ENCODE measurements at regions of chr11 and their contacts with region 1.

Region 1: DNA sequence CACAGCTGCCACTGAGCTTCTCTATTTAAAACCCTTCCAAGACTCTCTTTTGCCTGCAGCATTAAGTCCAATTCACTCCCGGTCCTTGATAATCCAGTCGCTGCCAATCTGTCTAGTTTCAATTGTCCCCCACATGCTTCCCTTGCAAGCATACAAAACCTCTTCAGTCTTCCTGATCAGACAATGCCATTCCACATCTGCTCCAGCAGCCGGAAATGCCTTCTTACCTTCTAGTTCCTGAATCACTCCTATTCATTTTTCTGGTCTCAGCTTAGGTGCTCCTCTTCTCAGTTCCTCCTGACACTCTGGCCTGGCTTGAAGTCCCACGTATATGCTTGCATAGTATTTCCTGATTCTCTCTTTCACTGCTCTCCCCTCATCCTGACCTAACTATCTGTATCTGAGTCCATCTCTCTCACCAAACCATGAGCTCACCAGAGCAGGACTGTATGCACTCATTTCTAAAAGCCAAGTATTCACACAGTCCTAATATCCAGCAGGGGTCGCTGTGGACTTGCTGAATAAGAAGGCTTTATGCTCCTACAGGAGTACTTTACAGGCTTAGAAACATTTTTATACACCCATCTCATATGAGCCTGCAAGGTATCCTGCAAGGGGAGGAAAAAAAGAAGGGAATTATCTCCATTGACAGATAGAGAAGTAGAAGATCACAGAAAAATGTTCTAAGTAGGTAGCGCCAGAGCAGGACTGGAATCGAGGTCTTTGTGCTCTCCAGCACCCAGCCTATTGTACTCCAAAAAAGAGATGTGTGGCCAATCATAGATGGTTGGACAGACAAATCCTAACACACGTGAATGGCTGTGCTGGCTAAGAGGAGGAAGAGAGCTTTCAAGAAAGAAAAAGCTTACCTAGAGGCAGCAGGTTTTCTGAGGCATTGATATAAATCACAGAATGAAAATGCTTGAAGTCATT is 19.2 kb downstream of the XRRA1 start:
- DNase-seq: peak; percentile 74
- H3K4me3 ChIP-seq: no peak overlapping the region
- CTCF ChIP-seq: peak; percentile 76

Region 2: DNA sequence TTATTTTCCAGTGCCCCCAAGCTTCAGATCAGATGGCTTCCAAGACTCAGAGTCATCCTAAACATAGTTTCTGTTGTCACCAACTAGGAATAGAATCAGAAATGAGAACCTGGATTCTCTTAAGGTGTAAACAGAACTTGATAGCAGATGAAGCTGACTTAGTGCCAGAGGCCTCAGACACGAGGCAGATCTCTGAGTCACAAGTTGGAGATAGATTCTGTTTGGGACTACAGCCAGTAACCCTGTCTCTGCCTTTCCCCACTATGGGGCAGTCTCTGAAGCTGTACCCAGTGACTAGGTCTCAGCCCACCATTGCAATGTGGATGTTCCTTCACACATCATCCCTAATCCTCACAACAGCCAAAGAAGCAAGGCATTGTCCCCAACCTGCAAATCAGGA is 84.4 kb after region 1 on chr11:
- CTCF ChIA-PET with region 1: interaction called, 12 read pairs
- POLR2A ChIA-PET with region 1: no interaction called
- DNase-seq: peak; percentile 57
- H3K4me3 ChIP-seq: no peak overlapping the region
- CTCF ChIP-seq: no peak

Region 3: DNA sequence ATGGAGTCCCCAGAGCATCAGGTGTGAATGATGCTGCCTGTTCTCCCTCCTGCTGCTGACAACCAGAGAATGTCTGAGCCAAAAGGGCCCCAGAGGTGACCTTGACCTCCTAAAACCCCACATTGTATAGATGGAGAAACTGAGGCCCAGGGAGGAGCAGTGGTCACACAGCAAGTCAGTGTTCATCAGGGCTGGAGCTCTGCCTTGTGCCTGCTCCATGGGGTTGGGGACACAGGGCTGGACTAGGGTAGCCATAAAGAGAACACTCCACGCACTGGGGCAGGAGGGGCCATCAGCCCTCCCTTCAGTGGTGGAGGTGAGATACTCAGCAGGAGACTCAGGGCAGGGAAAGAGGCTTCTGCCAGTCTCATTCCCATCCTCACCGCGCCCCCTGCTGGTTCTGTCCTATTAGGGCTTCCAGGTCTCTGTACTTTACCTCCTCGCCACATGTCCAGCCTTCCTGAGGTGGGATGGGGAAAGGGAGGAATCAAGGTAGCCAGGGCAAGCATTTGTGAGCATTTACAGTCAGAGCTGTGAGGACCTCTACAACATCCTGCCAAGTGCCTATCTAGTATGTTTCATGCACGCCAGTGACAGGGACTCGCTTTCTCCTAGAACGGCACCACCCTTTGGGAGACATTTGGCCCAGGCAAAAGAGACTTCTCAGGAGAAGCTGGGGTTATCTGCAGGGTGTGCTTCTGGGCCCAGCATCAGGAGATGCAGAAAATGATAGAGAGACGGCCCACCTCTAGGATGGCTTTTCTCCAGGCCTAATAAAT is 102.3 kb after region 1 on chr11:
- CTCF ChIA-PET with region 1: interaction called, 127 read pairs
- POLR2A ChIA-PET with region 1: no interaction called
- DNase-seq: no peak
- H3K4me3 ChIP-seq: no peak overlapping the region
- CTCF ChIP-seq: peak; percentile 93

Region 4: DNA sequence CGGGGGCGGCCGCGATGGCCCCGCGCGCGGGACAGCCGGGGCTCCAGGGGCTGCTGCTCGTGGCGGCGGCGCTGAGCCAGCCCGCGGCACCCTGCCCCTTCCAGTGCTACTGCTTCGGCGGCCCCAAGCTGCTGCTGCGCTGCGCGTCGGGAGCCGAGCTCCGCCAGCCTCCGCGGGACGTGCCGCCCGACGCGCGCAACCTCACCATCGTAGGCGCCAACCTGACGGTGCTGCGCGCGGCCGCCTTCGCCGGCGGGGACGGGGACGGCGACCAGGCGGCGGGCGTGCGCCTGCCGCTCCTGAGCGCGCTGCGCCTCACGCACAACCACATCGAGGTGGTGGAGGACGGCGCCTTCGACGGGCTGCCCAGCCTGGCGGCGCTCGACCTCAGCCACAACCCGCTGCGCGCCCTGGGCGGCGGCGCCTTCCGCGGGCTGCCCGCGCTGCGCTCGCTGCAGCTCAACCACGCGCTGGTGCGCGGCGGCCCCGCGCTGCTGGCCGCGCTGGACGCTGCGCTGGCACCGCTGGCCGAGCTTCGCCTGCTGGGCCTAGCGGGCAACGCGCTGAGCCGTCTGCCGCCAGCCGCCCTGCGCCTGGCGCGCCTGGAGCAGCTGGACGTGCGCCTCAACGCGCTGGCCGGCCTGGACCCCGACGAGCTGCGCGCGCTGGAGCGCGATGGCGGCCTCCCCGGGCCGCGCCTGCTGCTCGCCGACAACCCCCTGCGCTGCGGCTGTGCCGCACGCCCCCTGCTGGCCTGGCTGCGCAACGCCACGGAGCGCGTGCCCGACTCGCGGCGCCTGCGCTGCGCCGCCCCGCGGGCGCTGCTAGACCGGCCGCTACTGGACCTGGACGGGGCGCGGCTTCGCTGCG is 311.6 kb after region 1 on chr11:
- CTCF ChIA-PET with region 1: interaction called, 149 read pairs
- POLR2A ChIA-PET with region 1: no interaction called
- DNase-seq: no peak
- H3K4me3 ChIP-seq: peak overlapping the region; percentile 62
- CTCF ChIP-seq: peak; percentile 75

Measured in AG04449 (cell line).